B cell (primary cell): ENCODE measurements at regions of chr10 and their contacts with region 1.

Region 1: GRCh38 chr10:78047314-78047891 is 13.7 kb downstream of the RPS24 start:
- DNase-seq: peak; percentile 79
- ATAC-seq: peak; percentile 76
- H3K4me3 ChIP-seq: no peak overlapping the region
- H3K4me3 Mint-ChIP-seq: no peak overlapping the region
- H3K27ac ChIP-seq: no peak overlapping the region
- H3K27ac Mint-ChIP-seq: no peak overlapping the region
- H3K4me1 ChIP-seq: peaks cover 0 to 17% of the 10 kb centered on the region in 2 donors
- H3K4me1 Mint-ChIP-seq: peaks cover 16% of the 10 kb centered on the region
- H3K27me3 ChIP-seq: no peaks in the 10 kb centered on the region
- H3K27me3 Mint-ChIP-seq: no peaks in the 10 kb centered on the region
- CTCF ChIP-seq: peak; percentile 90

Region 2: DNA sequence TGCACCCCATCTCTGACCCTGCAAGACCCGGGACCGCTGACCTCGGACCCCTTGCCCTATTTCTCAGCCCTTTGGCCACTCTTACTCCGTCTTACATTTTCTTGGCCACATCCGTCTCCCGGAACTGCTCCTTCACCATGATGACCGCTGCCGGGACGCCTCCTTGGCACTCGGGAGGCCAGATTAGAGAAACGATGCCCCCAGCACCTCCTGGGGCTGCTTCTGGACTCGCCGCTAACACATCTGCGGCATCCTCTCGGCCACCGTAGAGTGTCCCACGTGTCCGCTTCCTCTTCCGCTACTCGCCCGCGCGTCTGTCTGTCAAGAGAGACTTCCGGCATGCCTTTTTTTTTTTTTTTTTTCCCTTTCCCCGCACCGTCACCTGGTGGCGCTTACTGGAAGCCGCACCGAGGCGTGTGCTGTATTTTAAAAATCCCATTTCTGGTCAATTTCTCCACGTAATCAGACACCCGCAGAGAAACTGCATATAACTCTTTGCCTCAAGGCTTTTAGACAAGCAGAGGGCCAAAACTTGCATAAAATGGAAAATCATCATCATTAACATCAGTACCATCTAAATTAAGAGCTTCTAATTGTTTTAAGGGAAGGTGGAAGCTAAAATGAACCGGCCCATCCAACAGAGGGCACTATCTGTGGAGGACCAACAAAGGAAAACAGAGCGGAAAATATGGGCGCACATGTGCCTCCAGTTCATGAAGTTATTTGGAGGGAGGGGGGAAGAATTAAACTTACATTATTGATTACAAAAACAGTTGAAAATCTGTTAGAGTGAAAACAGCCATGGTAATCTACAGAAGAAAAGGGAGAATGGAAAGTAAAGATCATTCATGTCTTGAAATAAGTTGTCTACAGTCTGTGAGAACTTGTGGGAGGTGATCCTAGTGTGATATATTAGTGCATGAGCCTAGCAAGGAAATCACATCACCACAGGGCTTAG is 17.9 kb before region 1 on chr10 and contains the start of gene POLR3A:
- CTCF ChIA-PET with region 1: interaction called, 13 read pairs
- POLR2A ChIA-PET with region 1: interaction called, 3 read pairs
- intact Hi-C with region 1: no loop called
- DNase-seq: peak; percentile 96
- ATAC-seq: peak; percentile 60
- H3K4me3 ChIP-seq: peak within 1 kb of the TSS; percentile 78 to 100 (median 96)
- H3K4me3 Mint-ChIP-seq: peak within 1 kb of the TSS; percentile 99
- H3K27ac ChIP-seq: peak within 1 kb of the TSS; percentile 43 to 81
- H3K27ac Mint-ChIP-seq: peak within 1 kb of the TSS; percentile 89
- H3K4me1 ChIP-seq: peaks cover 18 to 28% of the 10 kb centered on the region in 2 donors
- H3K4me1 Mint-ChIP-seq: peaks cover 37% of the 10 kb centered on the region
- H3K27me3 ChIP-seq: no peaks in the 10 kb centered on the region
- H3K27me3 Mint-ChIP-seq: no peaks in the 10 kb centered on the region
- CTCF ChIP-seq: peak; percentile 64
- total RNA-seq, gene POLR3A: 18.3 and 18.4 TPM in 2 replicates

Region 3: DNA sequence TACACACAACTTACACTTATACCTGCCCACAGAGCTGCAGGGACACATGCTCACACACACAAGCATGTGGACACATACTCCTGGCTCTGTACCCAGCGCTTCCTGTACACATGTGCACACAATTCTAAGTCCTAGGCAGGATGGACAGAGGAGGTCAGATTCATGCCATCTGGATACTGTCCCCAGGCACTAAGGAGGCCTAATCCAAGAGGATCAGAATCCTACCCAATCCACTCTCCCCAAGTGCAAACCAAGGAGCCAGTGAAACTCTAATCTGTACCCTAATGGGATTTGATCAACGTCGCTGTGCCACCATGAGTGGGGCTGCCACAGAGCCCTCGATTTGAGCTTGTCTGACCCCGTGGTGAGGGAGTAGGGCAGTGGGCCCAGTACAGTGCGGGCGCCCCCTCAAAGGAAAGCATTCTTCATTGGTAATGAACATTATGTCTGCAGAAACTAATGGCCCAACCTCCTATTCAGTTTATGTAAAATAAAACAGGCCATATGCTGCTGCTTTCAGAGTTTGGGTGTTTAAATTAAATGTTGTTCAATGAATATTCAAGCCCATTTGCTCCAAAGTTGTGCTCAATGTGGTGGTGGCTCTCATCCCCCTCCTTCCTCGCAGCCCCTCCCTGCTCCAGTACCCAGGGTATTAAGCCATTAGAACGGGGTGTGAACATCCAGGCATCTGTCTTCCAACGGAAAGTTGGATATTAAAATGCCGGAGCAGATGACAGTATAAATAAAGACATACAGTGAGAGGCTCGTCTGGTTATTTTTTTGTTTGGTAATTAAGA is 12.7 kb after region 1 on chr10:
- CTCF ChIA-PET with region 1: interaction called, 11 read pairs
- POLR2A ChIA-PET with region 1: no interaction called
- intact Hi-C with region 1: no loop called
- DNase-seq: no peak
- ATAC-seq: no peak
- H3K4me3 ChIP-seq: no peak overlapping the region
- H3K4me3 Mint-ChIP-seq: no peak overlapping the region
- H3K27ac ChIP-seq: no peak overlapping the region
- H3K27ac Mint-ChIP-seq: no peak overlapping the region
- H3K4me1 ChIP-seq: no peaks in the 10 kb centered on the region
- H3K4me1 Mint-ChIP-seq: no peaks in the 10 kb centered on the region
- H3K27me3 ChIP-seq: no peaks in the 10 kb centered on the region
- H3K27me3 Mint-ChIP-seq: no peaks in the 10 kb centered on the region
- CTCF ChIP-seq: no peak

Region 4: GRCh38 chr10:78437998-78438906 is 390.8 kb after region 1 on chr10:
- CTCF ChIA-PET with region 1: interaction called, 10 read pairs
- POLR2A ChIA-PET with region 1: no interaction called
- intact Hi-C with region 1: no loop called
- DNase-seq: peak; percentile 17
- ATAC-seq: no peak
- H3K4me3 ChIP-seq: no peak overlapping the region
- H3K4me3 Mint-ChIP-seq: no peak overlapping the region
- H3K27ac ChIP-seq: no peak overlapping the region
- H3K27ac Mint-ChIP-seq: no peak overlapping the region
- H3K4me1 ChIP-seq: no peaks in the 10 kb centered on the region
- H3K4me1 Mint-ChIP-seq: no peaks in the 10 kb centered on the region
- H3K27me3 ChIP-seq: no peaks in the 10 kb centered on the region
- H3K27me3 Mint-ChIP-seq: peaks cover 14% of the 10 kb centered on the region
- CTCF ChIP-seq: no peak

Region 5: GRCh38 chr10:78657163-78657861 is 609.9 kb after region 1 on chr10:
- CTCF ChIA-PET with region 1: interaction called, 28 read pairs
- POLR2A ChIA-PET with region 1: no interaction called
- intact Hi-C with region 1: no loop called
- DNase-seq: peak; percentile 40
- ATAC-seq: no peak
- H3K4me3 ChIP-seq: no peak overlapping the region
- H3K4me3 Mint-ChIP-seq: no peak overlapping the region
- H3K27ac ChIP-seq: no peak overlapping the region
- H3K27ac Mint-ChIP-seq: no peak overlapping the region
- H3K4me1 ChIP-seq: peaks cover 0 to 13% of the 10 kb centered on the region in 2 donors
- H3K4me1 Mint-ChIP-seq: peaks cover 13% of the 10 kb centered on the region
- H3K27me3 ChIP-seq: peaks cover 0 to 3% (median 1%) of the 10 kb centered on the region in 4 experiments
- H3K27me3 Mint-ChIP-seq: peaks cover 8% of the 10 kb centered on the region
- CTCF ChIP-seq: peak; percentile 50

Region 6: DNA sequence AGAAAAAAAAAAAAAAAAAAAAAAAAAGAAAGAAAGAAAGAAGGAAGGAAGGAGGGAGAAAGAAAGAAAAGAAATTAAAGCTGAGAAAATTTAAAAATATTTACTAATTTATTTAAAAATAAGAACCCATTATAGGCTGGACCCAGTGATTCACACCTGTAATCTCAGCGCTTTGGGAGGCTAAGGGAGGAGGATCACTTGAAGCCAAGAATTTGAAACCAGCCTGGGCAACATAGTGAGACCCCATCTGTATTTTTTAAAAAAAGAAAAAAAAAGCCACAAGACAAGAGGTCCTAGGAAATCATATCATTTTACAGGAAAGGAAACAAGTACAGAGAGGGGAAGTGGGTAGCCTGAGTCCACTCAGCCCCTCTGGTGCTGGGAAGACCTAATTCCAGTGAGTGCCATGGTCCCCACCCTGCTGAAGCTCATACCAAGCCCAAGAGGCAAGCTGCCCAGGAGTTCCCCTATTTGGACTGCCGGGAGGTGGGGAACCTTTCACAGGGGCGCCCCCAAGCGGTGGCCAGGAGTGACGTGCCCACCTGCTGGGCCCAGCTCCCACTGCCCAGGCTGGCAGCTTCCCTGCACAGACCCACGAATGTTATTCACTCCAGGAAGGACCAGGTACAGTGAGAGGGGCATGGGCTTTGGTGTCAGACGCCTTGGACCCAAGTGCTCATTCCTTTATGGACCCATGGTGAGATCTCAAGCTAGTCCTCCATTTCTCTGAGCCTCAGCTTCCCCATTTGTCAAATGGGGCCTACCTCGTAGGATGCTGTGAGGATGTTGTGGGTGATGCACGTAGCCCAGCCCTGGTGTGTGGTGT is 1155.0 kb after region 1 on chr10:
- CTCF ChIA-PET with region 1: interaction called, 148 read pairs
- POLR2A ChIA-PET with region 1: no interaction called
- intact Hi-C with region 1: no loop called
- DNase-seq: peak; percentile 51
- ATAC-seq: peak; percentile 49
- H3K4me3 ChIP-seq: no peak overlapping the region
- H3K4me3 Mint-ChIP-seq: no peak overlapping the region
- H3K27ac ChIP-seq: no peak overlapping the region
- H3K27ac Mint-ChIP-seq: no peak overlapping the region
- H3K4me1 ChIP-seq: no peaks in the 10 kb centered on the region
- H3K4me1 Mint-ChIP-seq: peaks cover 2% of the 10 kb centered on the region
- H3K27me3 ChIP-seq: no peaks in the 10 kb centered on the region
- H3K27me3 Mint-ChIP-seq: no peaks in the 10 kb centered on the region
- CTCF ChIP-seq: peak; percentile 48